ENCODE measurements at regions of chr2 and their contacts with region 1.

Region 1: GRCh38 chr2:71784734-71785473 is 331.5 kb downstream of the DYSF start:
- DNase-seq: peak; percentile 48 to 75
- ATAC-seq: peak; percentile 97 to 98
- H3K4me3 ChIP-seq: no peak overlapping the region
- H3K27ac ChIP-seq: peak overlapping the region; percentile 30 to 71 (median 48)
- H3K4me1 ChIP-seq: peaks cover 13 to 14% of the 10 kb centered on the region in 2 donors
- H3K27me3 ChIP-seq: no peaks in the 10 kb centered on the region
- CTCF ChIP-seq: peak in 3 of 5 experiments; percentile 8 to 38 (median 13)
- POLR2A ChIP-seq: no peak

Region 2: GRCh38 chr2:71749671-71750101 is 35.2 kb before region 1 on chr2:
- in situ Hi-C with region 1: no loop called
- intact Hi-C with region 1: loop called (anchors 2 kb)
- DNase-seq: peak; percentile 71 to 78
- ATAC-seq: peak; percentile 62 to 79
- H3K4me3 ChIP-seq: no peak overlapping the region
- H3K27ac ChIP-seq: peak overlapping the region; percentile 34 to 69 (median 48)
- H3K4me1 ChIP-seq: peaks cover 45 to 54% of the 10 kb centered on the region in 2 donors
- H3K27me3 ChIP-seq: no peaks in the 10 kb centered on the region
- CTCF ChIP-seq: no peak
- POLR2A ChIP-seq: no peak

Measured in gastrocnemius medialis (tissue), 4 donors.